Activated T-helper 2 cell treated with anti-CD3 and anti-CD28 coated beads, Interferon-gamma antibody, Interleukin-2, Interleukin-4, amounts not matched to agents 10 μg/mL and 5 μg/mL and 100 μg/mL, durations not matched to agents 14 hours and 24 hours and 36 hours (primary cell): ENCODE measurements at regions of chr22 and their contacts with region 1.

Region 1: GRCh38 chr22:17366830-17367229 is 2.4 kb upstream of the CECR2 start:
- DNase-seq: no peak
- H3K4me3 Mint-ChIP-seq: no peak overlapping the region
- H3K27ac Mint-ChIP-seq: no peak overlapping the region
- H3K4me1 Mint-ChIP-seq: peaks cover 18% of the 10 kb centered on the region
- H3K27me3 Mint-ChIP-seq: peaks cover 48% of the 10 kb centered on the region

Region 2: DNA sequence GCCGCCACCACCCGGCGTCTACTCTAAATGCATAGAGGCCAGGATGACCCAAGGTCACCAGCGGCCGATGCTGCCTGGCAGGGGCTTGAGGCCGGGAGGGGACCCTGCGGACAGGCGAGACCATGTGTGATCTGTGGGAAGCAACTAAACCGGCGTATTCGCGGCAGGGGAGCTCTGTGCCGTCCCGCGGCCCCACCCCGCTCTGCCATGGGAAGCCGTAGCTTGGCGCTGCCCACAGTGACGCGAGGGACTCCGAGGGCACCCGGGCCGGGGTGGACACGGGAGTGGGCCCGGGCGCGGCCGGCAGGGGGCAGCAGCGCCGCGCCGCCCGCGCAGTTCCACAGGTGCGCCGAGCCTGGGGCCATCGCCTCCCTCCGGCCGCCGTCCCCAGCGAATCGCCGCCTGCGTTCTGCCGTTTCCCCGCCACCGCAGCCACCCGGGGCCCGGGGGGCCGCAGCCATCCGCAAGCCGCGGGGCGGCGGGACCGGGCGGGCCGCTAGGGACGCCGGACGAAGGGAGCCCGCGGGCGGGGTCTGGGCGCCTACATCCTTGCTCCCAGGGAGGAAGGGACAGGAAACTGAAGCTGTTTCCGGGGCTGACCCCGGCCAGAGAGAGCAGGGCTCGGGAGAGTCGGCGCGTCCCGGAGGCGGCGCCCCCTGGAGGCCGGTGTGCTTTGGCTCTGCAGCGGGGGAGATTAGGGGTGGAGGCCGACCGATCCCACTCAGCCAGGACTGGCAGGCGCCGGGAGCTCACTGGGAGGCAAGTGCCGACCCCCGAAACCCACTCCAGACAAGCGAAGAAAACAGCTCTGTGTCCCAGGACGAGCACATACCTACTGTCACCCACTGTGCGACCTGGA is 195.3 kb before region 1 on chr22:
- intact Hi-C with region 1: loop called (anchors 2 kb)
- DNase-seq: peak; percentile 71
- H3K4me3 Mint-ChIP-seq: peak overlapping the region; percentile 79
- H3K27ac Mint-ChIP-seq: peak overlapping the region; percentile 50
- H3K4me1 Mint-ChIP-seq: peaks cover 2% of the 10 kb centered on the region
- H3K27me3 Mint-ChIP-seq: peaks cover 6% of the 10 kb centered on the region

Region 3: DNA sequence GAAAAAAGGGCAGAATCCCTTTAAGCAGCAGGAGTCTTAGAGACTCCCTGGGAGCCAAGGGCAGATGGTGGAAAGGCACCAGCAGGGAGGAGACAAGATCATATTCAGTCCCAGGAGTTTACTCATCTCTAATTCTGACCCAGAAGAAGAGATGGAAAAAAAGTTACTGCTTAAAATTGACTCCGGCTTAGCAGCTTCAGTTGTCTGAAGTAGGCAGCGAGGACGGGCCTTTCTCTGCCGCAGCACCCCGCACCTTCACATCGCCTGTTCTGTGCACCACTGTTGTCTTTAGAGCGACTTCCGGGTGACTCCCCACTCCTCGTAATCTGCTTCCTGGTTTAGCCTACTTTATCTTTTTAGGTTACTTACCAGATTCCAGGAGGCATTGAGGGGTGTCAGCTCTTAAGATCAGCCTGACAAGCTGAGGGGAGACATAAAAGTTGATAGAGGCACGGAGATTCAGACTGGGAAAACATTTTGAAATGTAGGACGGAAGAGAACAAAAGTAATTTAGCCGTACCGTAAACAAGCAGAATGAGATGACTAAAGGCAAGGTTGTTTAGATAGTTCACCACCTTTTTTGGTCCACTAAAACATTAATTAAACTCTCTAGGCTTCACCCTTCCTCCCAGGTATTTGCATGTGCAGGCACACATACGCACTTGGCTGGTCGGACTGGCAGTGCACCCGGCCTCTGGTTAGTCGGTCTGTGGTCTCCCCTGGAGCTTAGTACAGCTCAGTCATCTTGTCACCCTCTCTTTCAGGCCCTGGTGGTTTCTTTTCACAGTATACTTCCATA is 76.8 kb after region 1 on chr22:
- intact Hi-C with region 1: no loop called
- DNase-seq: no peak
- H3K4me3 Mint-ChIP-seq: no peak overlapping the region
- H3K27ac Mint-ChIP-seq: no peak overlapping the region
- H3K4me1 Mint-ChIP-seq: no peaks in the 10 kb centered on the region
- H3K27me3 Mint-ChIP-seq: peaks cover 3% of the 10 kb centered on the region